Natural killer cell (primary cell): ENCODE measurements at regions of chr5 and their contacts with region 1.

Region 1: GRCh38 chr5:66144074-66144833 is at the start of gene SREK1:
- DNase-seq: peak; percentile 87 to 93
- ATAC-seq: peak; percentile 84 to 93 (median 88)
- H3K4me3 ChIP-seq: peak within 1 kb of the TSS; percentile 91
- H3K4me3 Mint-ChIP-seq: peak within 1 kb of the TSS; percentile 99
- H3K27ac ChIP-seq: peak within 1 kb of the TSS; percentile 98
- H3K27ac Mint-ChIP-seq: peak within 1 kb of the TSS; percentile 99 to 100
- H3K4me1 ChIP-seq: peaks cover 4% of the 10 kb centered on the region
- H3K4me1 Mint-ChIP-seq: peaks cover 34 to 36% of the 10 kb centered on the region in 2 donors
- H3K27me3 ChIP-seq: no peaks in the 10 kb centered on the region
- H3K27me3 Mint-ChIP-seq: no peaks in the 10 kb centered on the region
- CTCF ChIP-seq: no peak
- total RNA-seq, gene SREK1: 151 to 177 (median 168) TPM

Region 2: GRCh38 chr5:65461491-65461890 is 682.8 kb before region 1 on chr5:
- intact Hi-C with region 1: no loop called
- DNase-seq: no peak
- ATAC-seq: no peak
- H3K4me3 ChIP-seq: no peak overlapping the region
- H3K4me3 Mint-ChIP-seq: no peak overlapping the region
- H3K27ac ChIP-seq: no peak overlapping the region
- H3K27ac Mint-ChIP-seq: no peak overlapping the region
- H3K4me1 ChIP-seq: no peaks in the 10 kb centered on the region
- H3K4me1 Mint-ChIP-seq: no peaks in the 10 kb centered on the region
- H3K27me3 ChIP-seq: no peaks in the 10 kb centered on the region
- H3K27me3 Mint-ChIP-seq: peaks cover 0 to 3% of the 10 kb centered on the region in 2 donors
- CTCF ChIP-seq: no peak

Region 3: DNA sequence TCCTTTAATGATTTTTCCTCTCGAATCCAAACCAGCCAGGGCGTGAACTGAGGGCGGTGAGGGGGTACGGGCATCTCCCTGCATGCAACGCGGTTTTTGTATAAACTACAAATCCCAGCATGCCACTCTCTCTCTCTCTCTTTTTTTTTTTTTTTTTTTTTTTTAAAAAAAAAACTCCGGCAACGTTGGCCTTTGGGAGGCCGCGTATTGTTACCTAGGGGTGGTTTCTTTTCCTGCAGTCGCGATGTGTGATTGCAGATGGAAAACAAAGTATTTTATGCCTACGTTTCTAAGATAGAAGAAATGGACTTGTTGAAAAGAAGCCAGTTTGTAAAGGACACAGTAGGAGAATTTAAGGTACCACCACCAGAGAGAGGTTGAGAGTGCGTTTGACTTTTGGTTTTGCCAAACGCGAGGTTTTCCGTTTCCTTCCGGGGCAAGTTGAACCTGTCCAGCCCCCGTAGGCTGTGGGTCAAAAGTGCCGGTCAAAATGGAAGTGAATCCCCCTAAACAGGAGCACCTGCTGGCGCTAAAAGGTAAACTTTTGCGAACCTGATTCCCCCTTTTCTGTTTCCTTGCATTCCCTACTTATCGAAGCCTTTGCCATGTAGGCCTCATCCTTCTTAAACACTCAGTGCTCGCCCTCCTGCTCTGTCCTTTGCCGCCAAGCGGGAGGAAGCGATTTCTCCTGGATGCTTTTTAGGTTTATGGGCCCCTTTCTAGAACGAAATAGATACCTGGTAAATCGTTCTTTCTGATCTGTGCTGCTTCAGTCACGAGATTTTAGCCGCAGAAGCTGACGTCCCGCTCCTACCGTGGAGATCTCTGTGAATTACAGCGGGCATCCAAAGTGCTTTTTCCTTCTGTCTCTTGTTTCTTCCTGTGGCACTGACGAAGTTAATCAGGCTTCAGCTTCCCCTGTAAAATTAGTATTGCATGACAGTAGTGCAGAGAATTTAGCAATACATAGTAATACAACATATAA is 519.4 kb before region 1 on chr5 and contains the starts of genes SHLD3 and TRAPPC13:
- intact Hi-C with region 1: loop called (anchors 2 kb)
- DNase-seq: peak; percentile 77 to 95
- ATAC-seq: peak; percentile 75 to 89 (median 76)
- H3K4me3 ChIP-seq: peak within 1 kb of the TSS; percentile 60
- H3K4me3 Mint-ChIP-seq: peak within 1 kb of the TSS; percentile 94
- H3K27ac ChIP-seq: peak within 1 kb of the TSS; percentile 73
- H3K27ac Mint-ChIP-seq: peak within 1 kb of the TSS; percentile 96 to 99
- H3K4me1 ChIP-seq: peaks cover 7% of the 10 kb centered on the region
- H3K4me1 Mint-ChIP-seq: peaks cover 34 to 35% of the 10 kb centered on the region in 2 donors
- H3K27me3 ChIP-seq: no peaks in the 10 kb centered on the region
- H3K27me3 Mint-ChIP-seq: no peaks in the 10 kb centered on the region
- CTCF ChIP-seq: peak; percentile 13
- total RNA-seq, gene SHLD3: 11.0 to 16.7 (median 12.7) TPM
- total RNA-seq, gene TRAPPC13: 20.9 to 27.5 (median 25.6) TPM

Region 4: GRCh38 chr5:65721720-65722574 is 422.3 kb before region 1 on chr5 and contains the starts of genes NLN and SGTB:
- intact Hi-C with region 1: loop called (anchors 5 kb)
- DNase-seq: peak; percentile 84 to 89
- ATAC-seq: peak; percentile 97 to 99 (median 98)
- H3K4me3 ChIP-seq: peak within 1 kb of the TSS; percentile 73
- H3K4me3 Mint-ChIP-seq: peak within 1 kb of the TSS; percentile 92
- H3K27ac ChIP-seq: peak within 1 kb of the TSS; percentile 52
- H3K27ac Mint-ChIP-seq: peak within 1 kb of the TSS; percentile 62 to 76
- H3K4me1 ChIP-seq: peaks cover 27% of the 10 kb centered on the region
- H3K4me1 Mint-ChIP-seq: peaks cover 17 to 18% of the 10 kb centered on the region in 2 donors
- H3K27me3 ChIP-seq: no peaks in the 10 kb centered on the region
- H3K27me3 Mint-ChIP-seq: peaks cover 6 to 12% of the 10 kb centered on the region in 2 donors
- CTCF ChIP-seq: no peak
- total RNA-seq, gene NLN: 0.86 to 2.0 (median 1.3) TPM
- total RNA-seq, gene SGTB: 6.9 to 12.0 (median 10.0) TPM